ENCODE measurements at regions of chr10 and their contacts with region 1.

Region 1: GRCh38 chr10:44864637-44865288 is 46.4 kb upstream of the TMEM72 start:
- DNase-seq: peak; percentile 92
- H3K4me3 ChIP-seq: peak overlapping the region; percentile 71
- H3K27ac ChIP-seq: peak overlapping the region; percentile 75
- H3K4me1 ChIP-seq: peaks cover 32% of the 10 kb centered on the region
- H3K27me3 ChIP-seq: peaks cover 29% of the 10 kb centered on the region
- CTCF ChIP-seq: peak; percentile 96

Region 2: DNA sequence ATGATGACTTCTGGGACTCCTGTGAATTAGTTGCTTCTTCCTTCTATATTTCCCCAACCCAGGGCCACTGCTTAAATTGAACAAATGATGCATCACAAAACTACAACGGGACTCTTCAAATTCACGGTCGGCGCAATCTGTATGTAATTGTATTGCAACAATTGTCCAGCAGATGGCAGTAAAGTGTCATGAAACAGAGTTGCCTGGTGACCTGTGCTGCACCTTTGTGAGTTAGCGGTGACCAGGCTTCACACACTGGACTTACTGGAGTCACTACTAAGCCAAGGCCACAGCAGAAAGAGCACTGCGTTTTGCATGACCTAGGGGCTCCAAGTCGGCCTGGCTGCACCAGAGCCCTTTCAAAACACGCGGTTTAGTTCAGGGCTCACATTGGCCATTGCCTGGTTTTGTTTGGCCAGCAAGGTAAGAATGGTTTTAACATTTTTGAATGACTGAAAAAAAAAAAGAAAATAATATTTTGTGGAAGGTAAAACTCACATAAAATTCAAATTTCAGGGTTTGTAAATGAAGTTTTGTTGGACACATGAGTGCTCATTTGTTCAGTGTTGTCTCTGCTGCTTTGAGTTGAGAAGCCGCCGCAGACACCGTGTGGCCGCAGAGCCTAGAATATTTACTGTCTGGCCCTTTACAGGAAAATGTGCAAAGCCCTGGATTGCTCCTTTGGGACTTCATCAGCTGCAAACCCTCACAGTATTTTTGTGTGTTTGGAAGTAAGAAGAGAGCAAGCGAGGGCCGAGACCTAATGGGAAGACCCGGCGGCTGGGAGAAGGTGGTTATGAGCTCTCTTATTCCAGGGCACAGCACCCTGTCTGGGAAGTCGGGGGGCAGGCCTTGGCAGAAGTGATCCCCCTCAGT is 1192.9 kb before region 1 on chr10:
- intact Hi-C with region 1: loop called (anchors 5 kb)
- DNase-seq: no peak
- H3K4me3 ChIP-seq: no peak overlapping the region
- H3K27ac ChIP-seq: peak overlapping the region; percentile 15
- H3K4me1 ChIP-seq: peaks cover 15% of the 10 kb centered on the region
- H3K27me3 ChIP-seq: peaks cover 39% of the 10 kb centered on the region
- CTCF ChIP-seq: peak; percentile 83

Region 3: GRCh38 chr10:44520651-44521050 is 344.1 kb before region 1 on chr10:
- intact Hi-C with region 1: no loop called
- DNase-seq: no peak
- H3K4me3 ChIP-seq: no peak overlapping the region
- H3K27ac ChIP-seq: no peak overlapping the region
- H3K4me1 ChIP-seq: no peaks in the 10 kb centered on the region
- H3K27me3 ChIP-seq: no peaks in the 10 kb centered on the region
- CTCF ChIP-seq: no peak

Region 4: DNA sequence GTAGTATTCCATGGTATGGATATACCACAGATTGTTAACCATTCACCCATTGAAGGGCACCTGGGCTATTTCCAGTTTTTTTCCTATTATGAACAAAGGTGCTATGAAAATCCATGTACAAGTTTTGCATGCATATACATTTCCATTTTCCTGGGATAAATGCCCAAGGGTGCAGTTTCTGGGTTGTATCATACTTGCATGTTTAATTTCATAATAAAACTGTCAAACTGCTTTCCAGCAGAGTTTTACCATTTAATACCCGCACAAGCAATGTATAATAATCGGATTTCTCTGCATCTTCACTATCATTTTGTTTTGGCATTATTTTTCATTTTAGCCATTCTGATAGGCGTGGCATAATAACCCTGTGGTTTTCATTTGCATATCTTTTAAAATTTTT is 325.6 kb before region 1 on chr10:
- intact Hi-C with region 1: no loop called
- DNase-seq: no peak
- H3K4me3 ChIP-seq: no peak overlapping the region
- H3K27ac ChIP-seq: no peak overlapping the region
- H3K4me1 ChIP-seq: no peaks in the 10 kb centered on the region
- H3K27me3 ChIP-seq: no peaks in the 10 kb centered on the region
- CTCF ChIP-seq: no peak